ENCODE measurements at regions of chr3 and their contacts with region 1.

Region 1: GRCh38 chr3:42502429-42503250 is at the start of gene VIPR1:
- DNase-seq: peak; percentile 85 to 97 (median 95)
- ATAC-seq: peak; percentile 98
- H3K4me3 ChIP-seq: peak within 1 kb of the TSS; percentile 70
- H3K4me3 Mint-ChIP-seq: peak within 1 kb of the TSS; percentile 91 to 98 (median 96)
- H3K27ac ChIP-seq: peak within 1 kb of the TSS; percentile 79
- H3K27ac Mint-ChIP-seq: peak within 1 kb of the TSS; percentile 70 to 96 (median 94)
- H3K4me1 ChIP-seq: peaks cover 0 to 39% of the 10 kb centered on the region in 2 donors
- H3K4me1 Mint-ChIP-seq: peaks cover 31 to 64% (median 47%) of the 10 kb centered on the region in 7 donors
- H3K27me3 ChIP-seq: peaks cover 0 to 5% of the 10 kb centered on the region in 2 donors
- H3K27me3 Mint-ChIP-seq: peaks cover 18 to 49% (median 20%) of the 10 kb centered on the region in 5 donors
- total RNA-seq, gene VIPR1: 8.0 to 133 (median 70.5) TPM

Region 2: DNA sequence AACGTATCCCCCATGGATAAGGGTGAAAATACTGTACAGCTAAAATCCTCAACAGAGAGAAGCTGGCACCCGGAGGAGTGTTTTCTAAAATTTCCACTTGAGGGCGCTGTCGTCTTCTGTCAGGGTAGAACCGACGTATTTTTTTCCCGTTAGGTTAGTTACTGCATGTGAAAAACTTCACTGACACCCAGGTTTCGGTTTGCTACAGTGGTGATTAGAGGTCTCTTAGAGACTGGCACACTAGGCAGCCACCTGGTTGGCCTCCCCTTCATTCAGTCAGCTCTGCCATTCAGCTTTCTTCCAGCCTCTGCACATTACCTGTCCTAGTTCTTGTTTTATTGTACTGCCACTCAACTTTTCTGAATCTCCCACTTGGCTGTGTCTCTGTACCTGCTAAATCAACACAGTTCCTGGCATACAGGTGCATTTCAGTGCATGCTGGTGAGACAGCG is 255.0 kb before region 1 on chr3:
- CTCF ChIA-PET with region 1: interaction called, 7 read pairs
- POLR2A ChIA-PET with region 1: no interaction called
- intact Hi-C with region 1: loop called in 1 of 2 experiments (anchors 1 kb)
- DNase-seq: peak in 8 of 9 donors; percentile 39 to 81 (median 66)
- ATAC-seq: peak; percentile 69
- H3K4me3 ChIP-seq: no peak overlapping the region
- H3K4me3 Mint-ChIP-seq: peak overlapping the region in 7 of 10 donors; percentile 15 to 60 (median 30)
- H3K27ac ChIP-seq: no peak overlapping the region
- H3K27ac Mint-ChIP-seq: peak overlapping the region in 5 of 9 donors; percentile 32 to 78 (median 60)
- H3K4me1 ChIP-seq: no peaks in the 10 kb centered on the region
- H3K4me1 Mint-ChIP-seq: peaks cover 2 to 11% (median 8%) of the 10 kb centered on the region in 7 donors
- H3K27me3 ChIP-seq: no peaks in the 10 kb centered on the region
- H3K27me3 Mint-ChIP-seq: peaks cover 0 to 39% (median 0%) of the 10 kb centered on the region in 5 donors

Region 3: DNA sequence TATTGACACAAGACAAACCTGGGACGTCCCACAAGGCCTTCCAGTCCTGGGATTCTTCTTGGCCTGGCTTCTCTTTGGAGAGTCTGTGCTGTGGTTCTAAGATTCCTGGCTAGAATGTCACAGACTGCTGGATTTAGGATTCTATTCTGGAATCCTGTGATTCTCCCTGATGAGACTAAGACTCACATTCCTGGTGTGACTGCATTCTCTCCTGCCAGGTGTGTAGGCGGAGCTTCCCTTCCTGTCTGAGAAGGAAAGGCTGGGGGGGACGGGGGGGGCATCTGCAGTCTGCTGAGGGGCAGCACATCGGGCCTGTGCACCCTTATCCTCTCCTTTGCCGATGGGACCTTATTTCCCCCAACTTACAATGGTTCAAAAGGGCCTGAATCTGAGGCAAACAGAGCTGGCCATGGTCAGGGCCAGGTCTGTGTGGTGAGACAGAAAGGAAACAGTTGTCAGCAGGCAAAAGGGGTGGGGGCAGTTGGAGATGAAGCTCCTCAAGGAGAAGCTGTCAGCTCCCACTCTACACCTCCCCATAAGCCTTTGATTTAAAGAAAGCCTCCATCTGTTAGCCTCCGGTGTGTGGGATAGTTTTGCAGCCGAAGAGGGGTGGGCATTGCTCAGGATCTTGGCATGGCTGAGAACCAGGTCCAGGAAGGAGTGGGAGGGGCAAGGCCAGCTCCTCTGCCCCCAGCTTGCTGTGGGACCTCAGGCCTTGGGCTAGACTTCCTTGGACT is 30.7 kb after region 1 on chr3:
- CTCF ChIA-PET with region 1: interaction called, 136 read pairs
- POLR2A ChIA-PET with region 1: interaction called, 82 read pairs
- intact Hi-C with region 1: loop called (anchors 1 kb)
- DNase-seq: no peak
- ATAC-seq: no peak
- H3K4me3 ChIP-seq: no peak overlapping the region
- H3K4me3 Mint-ChIP-seq: peak overlapping the region in 3 of 10 donors; percentile 53 to 86 (median 75)
- H3K27ac ChIP-seq: peak overlapping the region; percentile 12
- H3K27ac Mint-ChIP-seq: peak overlapping the region in 8 of 9 donors; percentile 83 to 98 (median 92)
- H3K4me1 ChIP-seq: peaks cover 30 to 61% of the 10 kb centered on the region in 2 donors
- H3K4me1 Mint-ChIP-seq: peaks cover 42 to 88% (median 87%) of the 10 kb centered on the region in 7 donors
- H3K27me3 ChIP-seq: no peaks in the 10 kb centered on the region
- H3K27me3 Mint-ChIP-seq: no peaks in the 10 kb centered on the region

Region 4: DNA sequence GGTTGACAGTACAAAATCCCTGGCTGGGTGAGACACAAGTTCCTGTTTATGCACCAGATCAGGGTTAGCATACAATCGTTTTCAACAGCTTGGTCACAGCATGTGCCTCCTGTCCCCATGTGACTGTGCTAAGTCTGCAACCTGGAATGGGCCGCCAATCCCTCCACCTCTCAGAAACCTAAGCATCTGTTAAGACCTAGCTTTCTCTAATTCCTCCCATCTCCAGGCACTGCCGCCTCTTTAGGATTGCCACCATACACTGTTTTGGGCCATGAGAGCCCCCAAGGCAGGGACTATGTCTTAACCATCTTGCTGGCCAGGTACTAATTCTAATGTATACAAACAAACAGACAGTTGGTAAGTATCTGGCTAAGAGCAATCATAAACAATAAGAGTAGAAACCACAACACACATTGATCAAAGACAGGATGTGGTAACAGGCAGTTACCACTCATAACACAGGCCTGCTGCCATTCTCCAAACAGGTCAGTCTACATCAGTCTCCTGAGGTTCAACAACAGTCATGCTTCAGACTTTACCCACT is 53.5 kb after region 1 on chr3:
- CTCF ChIA-PET with region 1: interaction called, 24 read pairs
- POLR2A ChIA-PET with region 1: interaction called, 59 read pairs
- intact Hi-C with region 1: loop called (anchors 1 kb)
- DNase-seq: peak in 8 of 9 donors; percentile 33 to 80 (median 70)
- ATAC-seq: peak; percentile 88
- H3K4me3 ChIP-seq: peak overlapping the region; percentile 4
- H3K4me3 Mint-ChIP-seq: peak overlapping the region; percentile 29 to 85 (median 55)
- H3K27ac ChIP-seq: peak overlapping the region; percentile 50
- H3K27ac Mint-ChIP-seq: peak overlapping the region; percentile 90 to 100 (median 95)
- H3K4me1 ChIP-seq: peaks cover 23 to 28% of the 10 kb centered on the region in 2 donors
- H3K4me1 Mint-ChIP-seq: peaks cover 19 to 47% (median 40%) of the 10 kb centered on the region in 7 donors
- H3K27me3 ChIP-seq: no peaks in the 10 kb centered on the region
- H3K27me3 Mint-ChIP-seq: no peaks in the 10 kb centered on the region

Region 5: GRCh38 chr3:42600111-42600988 is 97.7 kb after region 1 on chr3 and contains the start of gene NKTR:
- CTCF ChIA-PET with region 1: no interaction called
- POLR2A ChIA-PET with region 1: no interaction called
- intact Hi-C with region 1: loop called in 1 of 2 experiments (anchors 1 kb)
- DNase-seq: peak; percentile 98 to 100 (median 100)
- ATAC-seq: peak; percentile 97
- H3K4me3 ChIP-seq: peak within 1 kb of the TSS; percentile 75
- H3K4me3 Mint-ChIP-seq: peak within 1 kb of the TSS; percentile 91 to 98 (median 95)
- H3K27ac ChIP-seq: peak within 1 kb of the TSS; percentile 93
- H3K27ac Mint-ChIP-seq: peak within 1 kb of the TSS; percentile 95 to 99 (median 98)
- H3K4me1 ChIP-seq: peaks cover 11 to 25% of the 10 kb centered on the region in 2 donors
- H3K4me1 Mint-ChIP-seq: peaks cover 26 to 53% (median 43%) of the 10 kb centered on the region in 7 donors
- H3K27me3 ChIP-seq: no peaks in the 10 kb centered on the region
- H3K27me3 Mint-ChIP-seq: peaks cover 0 to 2% (median 0%) of the 10 kb centered on the region in 5 donors
- total RNA-seq, gene NKTR: 110 to 275 (median 238) TPM

Region 6: GRCh38 chr3:42755681-42756578 is 253.3 kb after region 1 on chr3:
- CTCF ChIA-PET with region 1: interaction called, 3 read pairs
- POLR2A ChIA-PET with region 1: no interaction called
- intact Hi-C with region 1: loop called (anchors 5 kb)
- DNase-seq: peak in 4 of 9 donors; percentile 12 to 21 (median 20)
- ATAC-seq: peak; percentile 65
- H3K4me3 ChIP-seq: no peak overlapping the region
- H3K4me3 Mint-ChIP-seq: no peak overlapping the region
- H3K27ac ChIP-seq: no peak overlapping the region
- H3K27ac Mint-ChIP-seq: peak overlapping the region in 1 of 9 donors; percentile 41
- H3K4me1 ChIP-seq: no peaks in the 10 kb centered on the region
- H3K4me1 Mint-ChIP-seq: peaks cover 0 to 6% (median 4%) of the 10 kb centered on the region in 7 donors
- H3K27me3 ChIP-seq: no peaks in the 10 kb centered on the region
- H3K27me3 Mint-ChIP-seq: peaks cover 0 to 16% (median 0%) of the 10 kb centered on the region in 5 donors

Measured in naive thymus-derived CD4-positive, alpha-beta T cell (primary cell).